Heart right ventricle (tissue), 16 donors: ENCODE measurements at regions of chr3 and their contacts with region 1.

Region 1: DNA sequence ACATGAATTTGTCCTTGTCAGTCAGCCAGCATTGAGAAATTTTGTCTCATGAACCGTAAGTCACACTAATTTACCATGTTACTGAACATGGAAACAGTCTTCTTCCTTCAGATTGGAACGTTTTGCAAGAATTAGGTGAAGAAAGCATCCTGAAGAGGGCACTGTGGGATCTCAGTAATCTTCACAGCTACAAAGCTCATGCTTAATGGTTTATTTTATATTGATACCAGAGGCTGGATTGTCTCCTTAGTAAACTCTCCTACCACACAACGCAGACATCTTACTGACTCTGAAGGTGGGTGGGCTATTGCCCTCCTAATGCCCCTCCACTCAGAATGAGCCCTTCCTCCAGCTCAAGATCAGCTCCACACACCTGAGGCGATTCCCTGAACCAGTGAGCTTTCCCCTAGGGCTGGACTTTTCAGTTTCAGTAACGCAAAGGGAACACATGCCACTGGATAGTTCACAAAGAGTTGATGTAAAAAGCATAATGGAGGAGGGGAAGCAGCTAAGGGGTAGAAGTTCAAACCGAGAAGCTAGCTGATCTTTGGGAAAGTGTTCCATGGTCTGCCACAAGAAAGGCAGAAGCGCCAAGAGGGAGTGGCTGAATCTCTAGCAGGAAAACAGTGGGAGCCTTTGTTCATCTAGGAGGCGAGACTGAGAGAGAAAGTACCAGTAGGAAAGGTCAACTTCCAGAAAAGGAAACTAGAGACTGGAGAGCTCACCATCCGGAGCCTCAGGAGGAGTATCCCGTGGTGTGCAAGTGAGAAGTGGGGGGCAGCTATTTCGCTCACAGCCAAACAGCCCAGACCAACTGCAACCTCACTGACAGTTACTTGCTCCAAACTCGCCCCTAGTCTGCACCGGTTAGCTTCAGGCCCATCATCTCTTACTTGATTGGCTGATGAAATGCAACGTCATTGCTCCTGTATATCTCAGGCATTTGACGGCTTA is at the start of gene SLC9C1:
- DNase-seq: peak in 1 of 2 donors; percentile 72
- ATAC-seq: peak; percentile 71 to 95 (median 86)
- H3K4me3 ChIP-seq: peak within 1 kb of the TSS; percentile 18 to 59 (median 50)
- H3K27ac ChIP-seq: peak within 1 kb of the TSS; percentile 15 to 83 (median 64)
- H3K4me1 ChIP-seq: peaks cover 0 to 23% (median 4%) of the 10 kb centered on the region in 9 donors
- H3K27me3 ChIP-seq: no peaks in the 10 kb centered on the region
- CTCF ChIP-seq: peak; percentile 32 to 79 (median 64)
- total RNA-seq, gene SLC9C1: 0.80 to 2.2 (median 1.6) TPM

Region 2: DNA sequence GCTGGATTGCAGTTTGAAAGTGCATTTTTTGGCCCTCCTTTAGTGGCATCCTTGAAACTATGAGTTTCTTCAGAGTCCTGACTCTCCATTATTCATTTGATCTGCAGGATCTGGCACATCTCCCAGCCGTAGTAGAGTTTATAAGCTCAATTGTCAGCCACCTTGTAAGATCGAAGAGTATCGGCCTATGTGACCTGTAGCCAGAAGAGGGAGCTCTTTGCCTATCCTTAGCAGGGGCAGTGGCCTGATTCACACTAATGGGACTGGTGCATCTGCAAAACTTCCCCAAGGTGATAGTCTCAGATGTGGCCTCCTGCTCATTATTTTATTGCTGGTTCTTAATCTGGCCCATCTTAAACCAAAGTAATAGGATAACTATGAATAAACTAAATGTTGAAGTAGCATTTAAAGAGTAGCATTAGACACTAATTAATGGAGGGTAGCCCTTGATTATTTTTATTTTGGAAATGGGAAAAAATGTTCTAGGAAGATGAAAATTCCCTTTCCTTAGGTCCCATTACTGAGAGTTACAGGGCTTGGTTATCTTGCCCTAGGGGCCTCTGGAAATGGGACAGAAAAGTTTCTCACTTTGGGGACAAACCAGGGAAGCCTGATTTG is 181.8 kb before region 1 on chr3:
- intact Hi-C with region 1: loop called in 3 of 10 experiments (anchors 10 kb)
- DNase-seq: peak in 1 of 2 donors; percentile 54
- ATAC-seq: peak in 7 of 8 donors; percentile 54 to 80 (median 76)
- H3K4me3 ChIP-seq: no peak overlapping the region
- H3K27ac ChIP-seq: no peak overlapping the region
- H3K4me1 ChIP-seq: peaks cover 0 to 17% (median 9%) of the 10 kb centered on the region in 9 donors
- H3K27me3 ChIP-seq: no peaks in the 10 kb centered on the region
- CTCF ChIP-seq: peak; percentile 37 to 88 (median 78)

Region 3: GRCh38 chr3:112128843-112129727 is 164.6 kb before region 1 on chr3:
- intact Hi-C with region 1: loop called in 1 of 10 experiments (anchors 10 kb)
- DNase-seq: no peak
- ATAC-seq: no peak
- H3K4me3 ChIP-seq: no peak overlapping the region
- H3K27ac ChIP-seq: no peak overlapping the region
- H3K4me1 ChIP-seq: peaks cover 4 to 55% (median 19%) of the 10 kb centered on the region in 9 donors
- H3K27me3 ChIP-seq: no peaks in the 10 kb centered on the region
- CTCF ChIP-seq: no peak

Region 4: GRCh38 chr3:112348943-112349342 is 55.3 kb after region 1 on chr3:
- intact Hi-C with region 1: no loop called
- DNase-seq: no peak
- ATAC-seq: no peak
- H3K4me3 ChIP-seq: no peak overlapping the region
- H3K27ac ChIP-seq: peak overlapping the region in 1 of 10 donors; percentile 2
- H3K4me1 ChIP-seq: peaks cover 0 to 62% (median 13%) of the 10 kb centered on the region in 9 donors
- H3K27me3 ChIP-seq: no peaks in the 10 kb centered on the region
- CTCF ChIP-seq: no peak

Region 5: GRCh38 chr3:112531358-112531781 is 237.7 kb after region 1 on chr3:
- intact Hi-C with region 1: loop called in 3 of 10 experiments (anchors 2 to 5 kb)
- DNase-seq: no peak
- ATAC-seq: no peak
- H3K4me3 ChIP-seq: no peak overlapping the region
- H3K27ac ChIP-seq: no peak overlapping the region
- H3K4me1 ChIP-seq: no peaks in the 10 kb centered on the region
- H3K27me3 ChIP-seq: no peaks in the 10 kb centered on the region
- CTCF ChIP-seq: peak in 8 of 9 donors; percentile 21 to 73 (median 60)

Region 6: DNA sequence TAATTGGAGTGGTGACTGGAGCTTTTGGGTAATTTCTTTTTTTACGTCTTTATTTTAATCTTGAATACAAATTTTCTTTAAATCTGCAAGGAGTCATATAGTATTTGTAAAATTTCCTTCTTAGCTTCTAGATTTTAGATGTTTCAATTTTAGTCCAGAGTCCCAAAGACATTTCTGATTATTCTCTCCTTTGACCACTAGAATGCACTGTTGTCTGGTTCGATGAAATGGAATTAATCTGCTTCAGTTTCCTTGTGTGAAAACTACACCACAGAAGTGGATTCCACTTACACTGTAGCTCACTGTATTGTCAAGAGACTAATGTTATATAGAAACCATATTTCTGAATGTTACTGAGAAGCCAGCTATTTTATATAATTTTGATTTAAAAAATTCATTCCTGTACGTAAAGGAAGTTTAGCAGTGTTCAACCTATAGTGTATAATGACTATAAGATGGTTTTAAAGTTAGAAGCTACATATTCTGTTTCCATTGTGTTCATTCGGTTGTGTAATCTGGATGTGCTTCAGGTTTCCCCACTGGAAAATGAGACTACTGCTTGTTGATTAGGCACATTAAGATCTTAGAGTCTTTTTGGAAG is 1551.1 kb after region 1 on chr3:
- intact Hi-C with region 1: loop called in 1 of 10 experiments (anchors 10 kb)
- DNase-seq: no peak
- ATAC-seq: no peak
- H3K4me3 ChIP-seq: no peak overlapping the region
- H3K27ac ChIP-seq: no peak overlapping the region
- H3K4me1 ChIP-seq: peaks cover 0 to 1% (median 0%) of the 10 kb centered on the region in 9 donors
- H3K27me3 ChIP-seq: no peaks in the 10 kb centered on the region
- CTCF ChIP-seq: peak in 7 of 9 donors; percentile 49 to 70 (median 57)